Esophagus squamous epithelium (tissue), 5 donors: ENCODE measurements at regions of chr1 and their contacts with region 1.

Region 1: GRCh38 chr1:241834733-241835377 is 13.1 kb upstream of the EXO1 start:
- DNase-seq: no peak
- H3K4me3 ChIP-seq: no peak overlapping the region
- H3K27ac ChIP-seq: no peak overlapping the region
- H3K4me1 ChIP-seq: peaks cover 0 to 9% (median 0%) of the 10 kb centered on the region in 3 donors
- H3K27me3 ChIP-seq: peaks cover 0 to 11% (median 0%) of the 10 kb centered on the region in 4 donors
- CTCF ChIP-seq: peak in 5 of 6 experiments; percentile 27 to 66 (median 48)
- POLR2A ChIP-seq: no peak

Region 2: GRCh38 chr1:241600496-241600901 is 234.4 kb before region 1 on chr1:
- intact Hi-C with region 1: loop called (anchors 10 kb)
- DNase-seq: no peak
- H3K4me3 ChIP-seq: no peak overlapping the region
- H3K27ac ChIP-seq: no peak overlapping the region
- H3K4me1 ChIP-seq: peaks cover 0 to 7% (median 0%) of the 10 kb centered on the region in 3 donors
- H3K27me3 ChIP-seq: no peaks in the 10 kb centered on the region
- CTCF ChIP-seq: no peak
- POLR2A ChIP-seq: no peak